Endothelial cell of umbilical vein (primary cell): ENCODE measurements at regions of chr20 and their contacts with region 1.

Region 1: DNA sequence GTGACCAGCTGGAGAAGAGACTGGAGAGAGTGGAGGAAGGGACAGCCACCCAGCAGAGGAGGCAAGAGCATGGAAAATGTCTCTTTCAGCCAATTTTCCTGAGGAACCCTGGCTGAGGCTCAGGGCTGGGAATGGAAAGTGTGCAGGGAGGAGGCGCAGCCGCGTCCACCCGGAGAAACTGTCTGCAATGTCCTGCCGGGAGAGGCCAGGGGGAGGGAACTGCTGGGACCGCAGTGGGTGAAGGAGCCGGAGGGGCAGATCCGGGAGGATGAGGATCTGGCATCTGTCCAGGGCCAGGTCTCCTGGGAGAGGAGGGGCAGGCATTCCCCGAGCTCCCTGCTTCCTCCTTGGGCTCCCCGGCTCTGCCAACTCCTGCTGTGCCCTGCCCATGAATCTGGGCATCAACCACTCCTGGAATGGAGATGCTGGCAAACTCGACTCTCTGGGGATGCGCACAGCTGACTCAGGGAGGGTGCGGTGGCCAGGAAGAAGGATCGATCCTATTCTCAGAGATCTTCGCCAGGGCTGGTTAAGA is 17.4 kb upstream of the HM13 start:
- DNase-seq: no peak
- H3K4me3 ChIP-seq: no peak overlapping the region
- H3K27ac ChIP-seq: no peak overlapping the region
- H3K4me1 ChIP-seq: no peaks in the 10 kb centered on the region
- H3K27me3 ChIP-seq: peaks cover 14 to 24% of the 10 kb centered on the region in 2 experiments
- CTCF ChIP-seq: no peak
- POLR2A ChIP-seq: no peak

Region 2: DNA sequence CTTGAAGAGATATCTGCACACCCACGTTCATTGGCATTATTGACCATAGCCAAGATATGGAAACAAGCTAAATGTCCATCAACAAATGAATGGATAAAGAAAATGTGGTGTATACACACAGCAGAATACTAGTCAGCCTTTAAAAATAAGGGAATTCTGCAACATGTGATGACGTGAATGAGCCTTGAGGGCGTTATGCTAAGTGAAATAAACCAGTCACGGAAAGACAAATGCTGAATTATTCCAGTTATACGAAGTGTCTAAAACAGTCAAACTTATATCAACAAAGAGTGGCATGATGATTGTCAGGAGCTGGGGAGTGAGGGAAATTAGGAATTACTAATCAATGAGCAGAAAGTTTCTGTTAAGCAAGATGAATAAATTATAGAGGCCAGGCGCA is 82.4 kb before region 1 on chr20:
- CTCF ChIA-PET with region 1: interaction called, 43 read pairs
- POLR2A ChIA-PET with region 1: no interaction called
- dilution Hi-C with region 1: no loop called
- intact Hi-C with region 1: no loop called
- DNase-seq: no peak
- H3K4me3 ChIP-seq: no peak overlapping the region
- H3K27ac ChIP-seq: no peak overlapping the region
- H3K4me1 ChIP-seq: no peaks in the 10 kb centered on the region
- H3K27me3 ChIP-seq: no peaks in the 10 kb centered on the region
- CTCF ChIP-seq: no peak
- POLR2A ChIP-seq: no peak

Region 3: DNA sequence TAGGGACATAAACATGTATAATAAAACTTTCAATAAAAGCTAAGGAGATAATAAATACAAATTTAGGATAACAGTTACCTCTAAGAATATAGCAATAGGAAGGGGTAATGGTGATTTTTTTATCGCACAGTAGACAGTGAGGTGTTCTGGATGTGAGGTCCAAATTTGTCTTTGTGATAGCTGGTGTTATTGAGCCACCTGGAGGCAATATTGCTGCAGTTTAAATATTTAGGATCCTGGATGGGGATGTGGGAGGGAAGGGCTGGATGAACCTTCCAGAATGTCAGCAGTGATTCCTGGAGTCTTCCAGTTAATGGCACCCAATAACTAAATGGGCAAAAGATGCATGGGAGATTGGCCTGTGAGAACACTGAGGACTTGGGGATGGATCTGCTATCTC is 42.5 kb before region 1 on chr20:
- CTCF ChIA-PET with region 1: interaction called, 393 read pairs
- POLR2A ChIA-PET with region 1: no interaction called
- dilution Hi-C with region 1: no loop called
- intact Hi-C with region 1: no loop called
- DNase-seq: no peak
- H3K4me3 ChIP-seq: no peak overlapping the region
- H3K27ac ChIP-seq: no peak overlapping the region
- H3K4me1 ChIP-seq: no peaks in the 10 kb centered on the region
- H3K27me3 ChIP-seq: no peaks in the 10 kb centered on the region
- CTCF ChIP-seq: no peak
- POLR2A ChIP-seq: no peak

Region 4: GRCh38 chr20:31485450-31486339 is 11.1 kb before region 1 on chr20:
- CTCF ChIA-PET with region 1: interaction called, 114 read pairs
- POLR2A ChIA-PET with region 1: no interaction called
- dilution Hi-C with region 1: no loop called
- intact Hi-C with region 1: no loop called
- DNase-seq: peak; percentile 70
- H3K4me3 ChIP-seq: peak overlapping the region in 1 of 3 experiments; percentile 1
- H3K27ac ChIP-seq: no peak overlapping the region
- H3K4me1 ChIP-seq: no peaks in the 10 kb centered on the region
- H3K27me3 ChIP-seq: peaks cover 0 to 11% of the 10 kb centered on the region in 2 experiments
- CTCF ChIP-seq: no peak
- POLR2A ChIP-seq: no peak

Region 5: DNA sequence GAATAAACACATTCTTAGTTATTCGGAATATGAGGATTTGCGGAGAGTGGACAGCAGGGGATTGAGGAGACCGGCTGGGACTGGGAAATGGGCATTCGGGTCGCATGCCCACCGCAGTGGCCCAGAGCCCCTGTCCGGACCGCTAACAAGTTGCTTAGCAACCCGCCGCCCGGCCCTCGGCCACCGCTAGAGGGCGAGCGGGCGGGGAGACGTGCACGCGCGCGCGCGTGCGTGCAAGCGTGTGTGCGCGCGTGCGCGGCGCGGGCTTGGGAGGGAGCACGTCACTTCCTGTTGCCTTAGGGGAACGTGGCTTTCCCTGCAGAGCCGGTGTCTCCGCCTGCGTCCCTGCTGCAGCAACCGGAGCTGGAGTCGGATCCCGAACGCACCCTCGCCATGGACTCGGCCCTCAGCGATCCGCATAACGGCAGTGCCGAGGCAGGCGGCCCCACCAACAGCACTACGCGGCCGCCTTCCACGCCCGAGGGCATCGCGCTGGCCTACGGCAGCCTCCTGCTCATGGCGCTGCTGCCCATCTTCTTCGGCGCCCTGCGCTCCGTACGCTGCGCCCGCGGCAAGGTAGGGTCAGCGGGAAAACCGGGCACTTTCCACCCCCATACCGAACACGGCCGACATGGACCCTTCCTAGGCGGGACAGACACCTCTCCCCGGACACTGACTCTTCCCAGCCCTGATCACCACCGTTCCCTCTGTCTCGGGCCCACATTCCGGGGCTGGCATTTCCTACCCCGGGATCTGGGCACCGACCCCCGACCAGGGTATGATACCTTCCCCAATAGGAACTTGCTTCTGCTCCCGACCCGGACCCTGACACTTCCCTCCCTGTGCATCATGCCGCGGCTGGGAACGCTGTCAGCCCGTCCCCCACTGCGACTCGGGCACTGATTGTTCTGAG is 17.6 kb after region 1 on chr20 and contains the start of gene HM13:
- CTCF ChIA-PET with region 1: interaction called, 24 read pairs
- POLR2A ChIA-PET with region 1: no interaction called
- dilution Hi-C with region 1: no loop called
- intact Hi-C with region 1: no loop called
- DNase-seq: peak; percentile 94
- H3K4me3 ChIP-seq: peak within 1 kb of the TSS; percentile 7 to 84 (median 70)
- H3K27ac ChIP-seq: peak within 1 kb of the TSS; percentile 38
- H3K4me1 ChIP-seq: peaks cover 25% of the 10 kb centered on the region
- H3K27me3 ChIP-seq: no peaks in the 10 kb centered on the region
- CTCF ChIP-seq: peak; percentile 94 to 99
- POLR2A ChIP-seq: peak; percentile 95
- total RNA-seq, gene HM13: 188 and 211 TPM in 2 replicates